Activated B cell treated with CpG ODN at 0.5 μM for 24 hours (primary cell): ENCODE measurements at regions of chr20 and their contacts with region 1.

Region 1: GRCh38 chr20:31951530-31952453 is at the start of gene PDRG1:
- DNase-seq: peak; percentile 99
- ATAC-seq: peak; percentile 99
- H3K4me3 Mint-ChIP-seq: peak within 1 kb of the TSS; percentile 99
- H3K27ac Mint-ChIP-seq: peak within 1 kb of the TSS; percentile 95
- H3K4me1 Mint-ChIP-seq: peaks cover 30% of the 10 kb centered on the region
- H3K27me3 Mint-ChIP-seq: peaks cover 11% of the 10 kb centered on the region
- CTCF ChIP-seq: peak; percentile 51
- total RNA-seq, gene PDRG1: 16.4 and 18.7 TPM in 2 replicates

Region 2: GRCh38 chr20:31845300-31845863 is 106.4 kb before region 1 on chr20 and contains the start of gene FOXS1:
- CTCF ChIA-PET with region 1: interaction called, 126 read pairs
- POLR2A ChIA-PET with region 1: no interaction called
- intact Hi-C with region 1: no loop called
- DNase-seq: no peak
- ATAC-seq: no peak
- H3K4me3 Mint-ChIP-seq: no peak within 1 kb of the TSS
- H3K27ac Mint-ChIP-seq: no peak within 1 kb of the TSS
- H3K4me1 Mint-ChIP-seq: no peaks in the 10 kb centered on the region
- H3K27me3 Mint-ChIP-seq: peaks cover 10% of the 10 kb centered on the region
- CTCF ChIP-seq: no peak
- total RNA-seq, gene FOXS1: not detected in 2 replicates

Region 3: DNA sequence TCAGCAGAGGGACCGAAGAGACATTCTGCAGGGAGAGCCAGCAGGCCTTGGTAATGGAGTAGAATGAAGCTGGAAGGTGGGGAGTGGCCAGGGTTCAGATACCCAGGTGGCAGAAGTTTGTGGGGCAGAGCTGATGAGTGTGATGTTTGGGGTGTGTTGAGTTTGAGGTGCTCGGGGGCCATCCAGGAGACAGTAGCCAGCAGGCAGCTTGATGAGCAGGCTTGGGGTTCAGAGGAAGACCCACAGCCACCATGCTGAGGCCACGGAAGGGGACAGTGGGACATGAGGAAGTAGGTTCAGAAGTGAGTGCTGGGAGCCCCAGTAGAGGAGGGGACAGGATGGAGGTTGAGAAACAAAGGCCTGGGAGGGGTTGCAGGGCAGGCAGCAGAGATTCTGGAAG is 95.3 kb before region 1 on chr20:
- CTCF ChIA-PET with region 1: interaction called, 126 read pairs
- POLR2A ChIA-PET with region 1: interaction called, 22 read pairs
- intact Hi-C with region 1: loop called (anchors 1 kb)
- DNase-seq: no peak
- ATAC-seq: no peak
- H3K4me3 Mint-ChIP-seq: no peak overlapping the region
- H3K27ac Mint-ChIP-seq: no peak overlapping the region
- H3K4me1 Mint-ChIP-seq: peaks cover 13% of the 10 kb centered on the region
- H3K27me3 Mint-ChIP-seq: peaks cover 9% of the 10 kb centered on the region
- CTCF ChIP-seq: no peak

Region 4: DNA sequence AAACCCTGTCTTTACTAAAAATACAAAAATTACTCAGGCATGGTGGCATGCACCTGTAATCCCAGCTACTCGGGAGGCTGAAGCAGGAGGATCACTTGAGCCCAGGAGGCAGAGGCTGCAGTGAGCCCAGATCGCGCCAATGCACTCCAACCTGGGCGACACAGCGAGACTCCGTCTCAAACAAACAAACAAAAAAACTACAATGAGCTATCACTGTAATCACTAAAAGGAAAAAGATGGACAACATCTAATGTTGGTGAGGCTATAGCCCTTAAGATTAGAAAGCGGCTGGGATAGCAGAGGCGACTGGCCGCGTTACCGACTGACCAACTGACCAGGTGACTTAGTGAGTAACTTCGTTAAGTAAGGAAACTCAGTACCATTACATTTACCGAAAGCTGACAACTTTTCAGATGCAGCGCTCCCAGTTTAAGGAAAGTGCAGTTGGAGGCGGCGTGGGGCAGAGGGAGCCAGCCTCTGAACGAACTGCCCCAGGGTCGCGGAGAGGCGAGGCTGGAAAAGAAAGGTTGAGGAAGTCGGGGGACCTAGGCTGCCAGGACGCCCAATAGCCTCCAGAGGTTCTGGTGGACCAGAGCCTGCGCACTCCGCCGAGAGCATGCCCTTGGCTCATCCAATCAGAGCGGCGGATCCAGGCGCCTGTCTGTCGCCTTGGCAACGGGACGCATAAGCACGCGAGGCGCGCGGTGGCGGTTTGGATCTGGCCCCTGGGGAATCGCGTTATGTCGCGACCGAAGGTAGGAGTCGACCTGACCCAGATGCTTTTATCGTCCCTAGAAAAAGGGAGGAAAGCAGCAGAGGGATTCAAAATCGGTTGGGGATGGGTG is 72.4 kb before region 1 on chr20:
- CTCF ChIA-PET with region 1: interaction called, 14 read pairs
- POLR2A ChIA-PET with region 1: no interaction called
- intact Hi-C with region 1: loop called (anchors 1 kb)
- DNase-seq: peak; percentile 81
- ATAC-seq: peak; percentile 87
- H3K4me3 Mint-ChIP-seq: peak overlapping the region; percentile 93
- H3K27ac Mint-ChIP-seq: peak overlapping the region; percentile 93
- H3K4me1 Mint-ChIP-seq: peaks cover 14% of the 10 kb centered on the region
- H3K27me3 Mint-ChIP-seq: no peaks in the 10 kb centered on the region
- CTCF ChIP-seq: no peak

Region 5: DNA sequence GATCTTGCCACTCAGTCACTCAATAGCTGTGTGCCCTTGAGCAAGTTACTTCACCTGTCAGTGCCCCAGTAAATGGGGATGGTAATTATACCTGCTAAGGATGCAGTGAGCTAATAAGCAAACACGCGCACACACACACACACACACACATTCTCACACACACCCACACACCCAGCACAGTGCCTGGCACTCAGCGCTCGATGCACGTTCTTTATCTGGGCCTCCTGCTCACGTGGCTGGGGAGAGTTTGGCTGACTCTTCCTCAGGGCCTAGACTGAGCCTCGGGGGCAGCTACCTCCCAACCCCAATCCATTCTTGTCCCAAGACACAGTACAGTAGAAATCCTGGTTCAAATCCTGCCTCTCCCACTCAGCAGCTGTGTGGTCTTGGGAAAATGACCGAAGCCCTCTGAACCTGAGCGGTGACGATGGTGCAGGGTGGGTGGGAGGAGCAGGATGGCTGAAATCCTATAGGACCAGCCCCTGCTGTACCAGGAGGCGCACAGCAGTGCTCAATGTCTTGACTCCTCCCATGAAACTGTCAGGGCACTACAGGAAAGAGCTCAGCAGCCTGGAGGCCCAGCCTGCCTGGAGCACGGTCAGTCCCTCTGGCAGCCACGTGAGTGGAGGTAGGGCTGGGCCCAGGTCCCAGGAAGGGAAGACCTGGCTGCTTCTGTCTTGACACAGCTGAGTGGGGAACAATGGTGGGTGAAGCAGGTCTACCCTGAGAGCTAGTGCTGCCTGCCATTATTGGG is 31.5 kb before region 1 on chr20:
- CTCF ChIA-PET with region 1: no interaction called
- POLR2A ChIA-PET with region 1: no interaction called
- intact Hi-C with region 1: no loop called
- DNase-seq: no peak
- ATAC-seq: no peak
- H3K4me3 Mint-ChIP-seq: no peak overlapping the region
- H3K27ac Mint-ChIP-seq: no peak overlapping the region
- H3K4me1 Mint-ChIP-seq: peaks cover 18% of the 10 kb centered on the region
- H3K27me3 Mint-ChIP-seq: peaks cover 9% of the 10 kb centered on the region
- CTCF ChIP-seq: no peak

Region 6: GRCh38 chr20:31968291-31969126 is 16.7 kb after region 1 on chr20:
- CTCF ChIA-PET with region 1: interaction called, 5 read pairs
- POLR2A ChIA-PET with region 1: no interaction called
- intact Hi-C with region 1: loop called (anchors 1 kb)
- DNase-seq: peak; percentile 86
- ATAC-seq: peak; percentile 99
- H3K4me3 Mint-ChIP-seq: peak overlapping the region; percentile 85
- H3K27ac Mint-ChIP-seq: peak overlapping the region; percentile 12
- H3K4me1 Mint-ChIP-seq: peaks cover 14% of the 10 kb centered on the region
- H3K27me3 Mint-ChIP-seq: peaks cover 45% of the 10 kb centered on the region
- CTCF ChIP-seq: no peak

Region 7: DNA sequence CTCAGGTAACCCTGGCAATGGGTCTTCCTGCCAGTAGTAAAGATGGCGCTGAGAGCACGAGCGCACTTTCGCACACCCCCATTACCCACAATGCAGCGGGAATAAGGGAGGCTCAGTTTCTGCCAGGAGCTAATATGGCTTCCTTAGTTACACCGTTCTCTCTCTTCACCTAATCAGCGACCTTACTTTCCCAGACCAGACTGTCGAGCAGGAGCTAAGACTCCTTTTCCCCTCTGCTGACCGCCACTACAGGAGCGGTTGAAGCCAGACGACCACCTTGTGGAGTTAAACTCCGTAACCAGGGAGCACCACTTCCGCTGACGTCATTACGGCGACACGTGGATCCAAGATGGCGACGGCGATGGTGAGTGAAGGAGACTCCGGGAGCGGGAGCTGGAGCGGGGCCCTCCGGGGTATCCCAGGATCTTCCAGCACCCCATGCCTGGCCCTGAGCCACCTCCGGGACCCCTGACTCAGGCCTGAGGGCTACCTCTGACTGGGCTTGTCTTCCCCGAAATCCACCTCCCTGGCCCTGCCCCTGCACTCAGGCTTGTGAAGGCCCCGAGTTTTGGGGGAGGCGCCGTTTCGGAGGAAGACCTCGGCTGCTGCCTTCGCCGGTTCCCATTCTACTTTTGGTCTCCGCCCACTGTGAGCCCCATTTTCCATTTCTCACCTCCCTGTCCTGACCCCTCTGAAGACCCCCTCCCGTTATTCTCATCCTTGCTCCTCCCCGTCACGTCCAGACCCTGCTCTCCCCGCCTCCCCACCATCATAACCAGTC is 157.8 kb after region 1 on chr20 and contains the start of gene TM9SF4:
- CTCF ChIA-PET with region 1: no interaction called
- POLR2A ChIA-PET with region 1: no interaction called
- intact Hi-C with region 1: loop called (anchors 5 kb)
- DNase-seq: peak; percentile 86
- ATAC-seq: peak; percentile 88
- H3K4me3 Mint-ChIP-seq: peak within 1 kb of the TSS; percentile 97
- H3K27ac Mint-ChIP-seq: peak within 1 kb of the TSS; percentile 100
- H3K4me1 Mint-ChIP-seq: peaks cover 33% of the 10 kb centered on the region
- H3K27me3 Mint-ChIP-seq: no peaks in the 10 kb centered on the region
- CTCF ChIP-seq: no peak
- total RNA-seq, gene TM9SF4: 41.9 and 48.1 TPM in 2 replicates

Region 8: GRCh38 chr20:32119734-32120133 is 167.9 kb after region 1 on chr20:
- CTCF ChIA-PET with region 1: no interaction called
- POLR2A ChIA-PET with region 1: no interaction called
- intact Hi-C with region 1: no loop called
- DNase-seq: no peak
- ATAC-seq: no peak
- H3K4me3 Mint-ChIP-seq: no peak overlapping the region
- H3K27ac Mint-ChIP-seq: no peak overlapping the region
- H3K4me1 Mint-ChIP-seq: peaks cover 15% of the 10 kb centered on the region
- H3K27me3 Mint-ChIP-seq: no peaks in the 10 kb centered on the region
- CTCF ChIP-seq: no peak